ENCODE measurements at regions of chrX and their contacts with region 1.

Region 1: GRCh38 chrX:132219343-132219768 is at the start of gene RAP2C:
- DNase-seq: peak in 13 of 14 experiments; percentile 21 to 81 (median 42)
- ATAC-seq: no peak
- H3K4me3 ChIP-seq: peak within 1 kb of the TSS; percentile 85
- H3K4me3 Mint-ChIP-seq: peak within 1 kb of the TSS; percentile 93
- H3K27ac ChIP-seq: peak within 1 kb of the TSS; percentile 88 to 89
- H3K27ac Mint-ChIP-seq: peak within 1 kb of the TSS; percentile 100
- H3K4me1 ChIP-seq: peaks cover 8% of the 10 kb centered on the region
- H3K4me1 Mint-ChIP-seq: peaks cover 40% of the 10 kb centered on the region
- H3K27me3 ChIP-seq: no peaks in the 10 kb centered on the region
- H3K27me3 Mint-ChIP-seq: no peaks in the 10 kb centered on the region
- CTCF ChIP-seq: peak; percentile 54
- total RNA-seq, gene RAP2C: 51.9 to 52.0 TPM

Region 2: DNA sequence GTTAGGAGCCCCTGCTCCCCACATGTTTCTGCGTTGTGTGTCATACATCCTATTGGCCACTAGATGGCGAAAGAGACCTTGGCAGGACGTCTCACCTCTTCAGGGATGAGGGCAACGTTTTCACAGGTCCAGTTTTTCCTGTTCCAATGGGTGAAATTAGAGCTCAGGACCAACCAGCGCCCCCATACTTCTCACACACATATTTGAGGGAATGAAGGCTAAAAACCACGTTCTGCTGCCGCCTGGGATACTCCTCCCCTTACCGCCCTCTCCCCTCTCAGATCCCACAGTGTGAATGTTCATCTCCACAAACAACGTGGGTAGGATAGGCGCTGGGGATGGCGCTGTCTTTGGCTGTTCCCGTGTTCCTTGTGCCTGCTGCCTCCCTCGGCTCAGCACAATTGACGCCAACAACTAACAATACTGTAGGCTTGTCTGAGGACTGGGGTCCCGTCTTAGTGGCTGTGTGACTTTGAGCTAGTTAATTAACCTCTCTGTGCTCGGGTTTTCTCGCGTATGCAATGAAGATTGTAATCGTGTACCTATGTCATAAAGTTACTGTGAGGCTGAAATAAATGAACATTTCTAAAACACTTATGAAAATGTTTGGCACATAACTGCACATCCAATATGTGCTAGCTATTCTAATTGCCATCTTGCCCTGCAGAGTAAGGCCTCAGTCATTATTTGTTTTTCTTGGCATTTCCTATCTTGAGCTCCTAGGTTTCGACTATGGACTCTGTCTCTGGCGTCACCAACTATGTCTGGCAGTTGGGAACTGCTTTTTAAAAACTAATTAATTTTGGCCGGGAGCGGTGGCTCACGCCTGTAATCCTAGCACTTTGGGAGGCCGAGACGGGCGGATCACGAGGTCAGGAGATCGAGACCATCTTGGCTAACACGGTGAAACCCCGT is 377.6 kb before region 1 on chrX:
- CTCF ChIA-PET with region 1: interaction called, 5 read pairs
- POLR2A ChIA-PET with region 1: no interaction called
- intact Hi-C with region 1: loop called in 1 of 2 experiments (anchors 2 kb)
- DNase-seq: peak in 7 of 14 experiments; percentile 2 to 72 (median 43)
- ATAC-seq: peak; percentile 64
- H3K4me3 ChIP-seq: no peak overlapping the region
- H3K4me3 Mint-ChIP-seq: no peak overlapping the region
- H3K27ac ChIP-seq: no peak overlapping the region
- H3K27ac Mint-ChIP-seq: no peak overlapping the region
- H3K4me1 ChIP-seq: peaks cover 6% of the 10 kb centered on the region
- H3K4me1 Mint-ChIP-seq: no peaks in the 10 kb centered on the region
- H3K27me3 ChIP-seq: no peaks in the 10 kb centered on the region
- H3K27me3 Mint-ChIP-seq: no peaks in the 10 kb centered on the region
- CTCF ChIP-seq: peak; percentile 63

Region 3: DNA sequence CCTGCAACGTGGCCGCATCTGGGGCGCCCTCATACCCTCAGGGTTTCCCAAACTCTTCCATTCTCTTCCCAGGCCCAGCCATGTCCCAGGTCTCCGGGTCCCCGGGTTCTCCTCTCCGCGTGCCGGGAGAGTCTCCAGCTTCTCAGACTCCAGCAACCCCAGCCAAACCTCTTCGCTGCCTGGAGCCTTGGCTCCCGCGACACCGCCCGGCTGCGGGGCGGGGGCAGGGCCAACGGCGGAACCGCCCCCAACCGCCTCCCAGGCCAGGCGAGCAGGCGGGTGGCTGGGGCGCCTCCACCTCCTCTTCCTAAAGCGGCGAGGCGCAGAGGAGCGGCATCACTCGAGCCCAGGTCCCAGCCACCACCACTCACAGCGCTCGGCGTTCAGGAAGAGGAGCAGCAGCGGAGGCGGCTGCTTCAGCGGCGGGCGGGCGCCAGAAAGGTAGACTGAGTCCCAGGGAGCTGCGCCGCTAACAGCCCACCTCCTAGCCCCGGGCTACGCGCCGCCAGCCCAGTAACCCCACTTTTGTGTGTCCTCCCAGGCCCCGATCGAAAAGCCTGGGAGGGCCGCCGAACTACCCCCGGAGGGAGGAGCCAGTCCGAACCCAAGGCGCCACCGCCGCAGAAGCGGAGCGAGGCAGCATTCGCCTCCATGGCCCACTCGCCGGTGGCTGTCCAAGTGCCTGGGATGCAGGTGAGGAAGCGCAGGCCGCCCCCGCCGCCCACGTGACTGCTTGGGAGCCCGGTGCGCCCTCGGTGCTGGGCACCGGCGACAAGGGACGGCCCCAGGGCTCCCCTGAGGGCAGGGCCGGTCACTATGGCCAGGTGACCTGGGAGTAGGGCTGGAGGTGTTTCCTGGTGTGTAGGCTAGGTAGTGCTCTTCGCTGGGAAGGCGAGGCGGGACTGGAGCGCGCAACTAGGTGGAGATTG is 196.1 kb before region 1 on chrX and contains the start of gene STK26:
- CTCF ChIA-PET with region 1: no interaction called
- POLR2A ChIA-PET with region 1: interaction called, 28 read pairs
- intact Hi-C with region 1: loop called (anchors 1 to 2 kb)
- DNase-seq: peak; percentile 58 to 89 (median 73)
- ATAC-seq: peak; percentile 88
- H3K4me3 ChIP-seq: peak within 1 kb of the TSS; percentile 89
- H3K4me3 Mint-ChIP-seq: peak within 1 kb of the TSS; percentile 97
- H3K27ac ChIP-seq: peak within 1 kb of the TSS; percentile 62 to 81
- H3K27ac Mint-ChIP-seq: peak within 1 kb of the TSS; percentile 90
- H3K4me1 ChIP-seq: peaks cover 16% of the 10 kb centered on the region
- H3K4me1 Mint-ChIP-seq: peaks cover 35% of the 10 kb centered on the region
- H3K27me3 ChIP-seq: no peaks in the 10 kb centered on the region
- H3K27me3 Mint-ChIP-seq: no peaks in the 10 kb centered on the region
- CTCF ChIP-seq: no peak
- total RNA-seq, gene STK26: 25.2 to 27.9 TPM

Region 4: DNA sequence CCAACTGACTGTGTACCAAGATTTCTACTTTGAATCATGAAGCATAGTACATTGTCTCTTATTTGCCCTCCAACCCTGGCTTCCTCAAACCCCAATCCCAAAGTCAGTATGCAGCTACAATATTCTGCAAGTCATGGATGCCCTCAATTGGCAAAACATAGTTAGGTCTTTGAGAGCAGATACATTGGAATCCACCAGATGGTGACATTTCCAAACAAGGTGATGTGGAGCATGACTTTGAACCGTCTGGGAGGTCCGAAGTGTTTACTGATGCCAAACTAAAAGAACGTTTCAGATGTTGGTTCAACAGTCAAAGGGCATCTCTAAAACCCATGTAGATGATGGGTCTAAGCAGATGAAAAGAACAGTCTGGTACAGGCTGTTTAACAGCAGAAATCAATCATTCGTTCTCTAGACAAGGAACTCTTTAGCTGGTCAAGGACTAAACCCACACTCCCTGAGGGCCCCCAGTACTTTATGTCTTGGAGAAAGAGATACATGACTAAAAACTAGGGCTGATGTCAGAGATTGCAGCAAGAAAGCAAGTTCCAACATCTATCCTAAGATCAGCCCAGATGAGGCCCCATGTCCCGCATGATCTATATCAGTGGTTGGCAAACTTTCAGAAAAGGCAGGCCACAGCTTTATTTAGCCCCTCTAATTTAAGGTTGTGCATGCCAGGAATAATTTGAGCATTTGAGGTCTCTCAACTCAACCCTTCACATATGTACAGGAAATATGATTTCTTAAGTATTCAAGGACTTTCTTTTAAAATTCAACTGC is 47.7 kb before region 1 on chrX:
- CTCF ChIA-PET with region 1: interaction called, 3 read pairs
- POLR2A ChIA-PET with region 1: no interaction called
- intact Hi-C with region 1: loop called in 1 of 2 experiments (anchors 5 kb)
- DNase-seq: peak in 2 of 14 experiments; percentile 1 to 4
- ATAC-seq: no peak
- H3K4me3 ChIP-seq: no peak overlapping the region
- H3K4me3 Mint-ChIP-seq: no peak overlapping the region
- H3K27ac ChIP-seq: no peak overlapping the region
- H3K27ac Mint-ChIP-seq: no peak overlapping the region
- H3K4me1 ChIP-seq: no peaks in the 10 kb centered on the region
- H3K4me1 Mint-ChIP-seq: no peaks in the 10 kb centered on the region
- H3K27me3 ChIP-seq: no peaks in the 10 kb centered on the region
- H3K27me3 Mint-ChIP-seq: no peaks in the 10 kb centered on the region
- CTCF ChIP-seq: no peak

Region 5: DNA sequence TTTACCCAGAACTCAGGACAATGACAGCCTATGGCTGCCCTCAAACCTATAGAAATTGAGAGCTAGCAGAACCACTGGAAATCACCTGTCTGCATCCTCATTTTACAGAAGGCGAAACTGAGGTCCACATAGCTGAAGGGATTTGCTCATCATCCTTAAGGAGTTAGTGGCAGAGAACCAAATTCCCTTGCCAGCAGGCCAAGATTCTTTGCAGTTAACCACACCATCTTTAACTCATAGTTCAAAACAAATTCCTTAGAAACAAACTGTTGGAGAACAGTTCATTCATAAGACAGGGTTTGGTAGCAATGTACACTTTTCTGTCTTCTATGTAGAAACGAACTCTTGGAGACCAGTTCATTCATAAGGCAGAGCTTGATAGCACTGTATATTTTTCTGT is 37.8 kb after region 1 on chrX:
- CTCF ChIA-PET with region 1: no interaction called
- POLR2A ChIA-PET with region 1: no interaction called
- intact Hi-C with region 1: no loop called
- DNase-seq: no peak
- ATAC-seq: no peak
- H3K4me3 ChIP-seq: no peak overlapping the region
- H3K4me3 Mint-ChIP-seq: no peak overlapping the region
- H3K27ac ChIP-seq: no peak overlapping the region
- H3K27ac Mint-ChIP-seq: no peak overlapping the region
- H3K4me1 ChIP-seq: no peaks in the 10 kb centered on the region
- H3K4me1 Mint-ChIP-seq: no peaks in the 10 kb centered on the region
- H3K27me3 ChIP-seq: no peaks in the 10 kb centered on the region
- H3K27me3 Mint-ChIP-seq: no peaks in the 10 kb centered on the region
- CTCF ChIP-seq: no peak

Region 6: GRCh38 chrX:132336172-132336571 is 116.8 kb after region 1 on chrX:
- CTCF ChIA-PET with region 1: no interaction called
- POLR2A ChIA-PET with region 1: no interaction called
- intact Hi-C with region 1: no loop called
- DNase-seq: no peak
- ATAC-seq: no peak
- H3K4me3 ChIP-seq: no peak overlapping the region
- H3K4me3 Mint-ChIP-seq: no peak overlapping the region
- H3K27ac ChIP-seq: no peak overlapping the region
- H3K27ac Mint-ChIP-seq: no peak overlapping the region
- H3K4me1 ChIP-seq: no peaks in the 10 kb centered on the region
- H3K4me1 Mint-ChIP-seq: no peaks in the 10 kb centered on the region
- H3K27me3 ChIP-seq: no peaks in the 10 kb centered on the region
- H3K27me3 Mint-ChIP-seq: no peaks in the 10 kb centered on the region
- CTCF ChIP-seq: no peak

Region 7: GRCh38 chrX:132401935-132402334 is 182.6 kb after region 1 on chrX:
- CTCF ChIA-PET with region 1: no interaction called
- POLR2A ChIA-PET with region 1: no interaction called
- intact Hi-C with region 1: no loop called
- DNase-seq: no peak
- ATAC-seq: no peak
- H3K4me3 ChIP-seq: no peak overlapping the region
- H3K4me3 Mint-ChIP-seq: no peak overlapping the region
- H3K27ac ChIP-seq: no peak overlapping the region
- H3K27ac Mint-ChIP-seq: no peak overlapping the region
- H3K4me1 ChIP-seq: no peaks in the 10 kb centered on the region
- H3K4me1 Mint-ChIP-seq: no peaks in the 10 kb centered on the region
- H3K27me3 ChIP-seq: no peaks in the 10 kb centered on the region
- H3K27me3 Mint-ChIP-seq: no peaks in the 10 kb centered on the region
- CTCF ChIP-seq: no peak

Region 8: DNA sequence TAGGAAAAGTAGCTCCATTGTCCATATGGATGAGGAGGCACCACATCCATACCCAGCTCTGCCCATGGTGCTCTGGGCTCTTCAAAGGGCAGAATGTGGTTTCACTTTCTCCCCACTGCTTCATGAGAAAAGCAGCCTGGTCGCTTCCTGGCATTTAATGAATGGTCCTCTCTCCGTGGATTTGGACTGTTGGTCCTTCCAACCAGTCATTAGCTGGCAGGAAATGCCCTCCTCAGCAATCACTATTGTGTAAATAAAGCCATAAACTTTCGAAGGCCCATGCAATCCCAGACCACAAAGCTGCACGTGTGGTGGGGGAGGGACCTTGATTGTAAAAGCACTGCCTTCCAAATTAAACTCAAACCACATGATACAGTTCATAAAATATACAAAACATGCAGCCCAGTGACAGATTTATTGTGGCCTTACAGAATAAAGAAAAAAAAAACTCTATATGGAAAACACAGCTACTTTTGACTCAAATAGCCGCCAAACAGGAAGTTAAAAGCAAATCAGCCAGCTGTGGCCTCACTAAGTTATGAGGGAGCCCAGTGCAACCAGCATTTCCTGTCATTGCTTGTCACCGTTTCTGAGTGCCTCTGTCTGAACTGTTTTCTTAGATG is 261.3 kb after region 1 on chrX:
- CTCF ChIA-PET with region 1: no interaction called
- POLR2A ChIA-PET with region 1: no interaction called
- intact Hi-C with region 1: loop called (anchors 5 kb)
- DNase-seq: peak in 13 of 14 experiments; percentile 15 to 73 (median 28)
- ATAC-seq: peak; percentile 93
- H3K4me3 ChIP-seq: peak overlapping the region; percentile 52
- H3K4me3 Mint-ChIP-seq: peak overlapping the region; percentile 92
- H3K27ac ChIP-seq: peak overlapping the region; percentile 65 to 67
- H3K27ac Mint-ChIP-seq: peak overlapping the region; percentile 98
- H3K4me1 ChIP-seq: peaks cover 25% of the 10 kb centered on the region
- H3K4me1 Mint-ChIP-seq: peaks cover 68% of the 10 kb centered on the region
- H3K27me3 ChIP-seq: no peaks in the 10 kb centered on the region
- H3K27me3 Mint-ChIP-seq: no peaks in the 10 kb centered on the region
- CTCF ChIP-seq: no peak

Measured in CD4-positive, alpha-beta T cell (primary cell).